ENCODE measurements at regions of chr5 and their contacts with region 1.

Region 1: GRCh38 chr5:133051580-133052332 is at the start of gene HSPA4:
- DNase-seq: peak; percentile 98
- H3K4me3 Mint-ChIP-seq: peak within 1 kb of the TSS; percentile 97
- H3K27ac Mint-ChIP-seq: peak within 1 kb of the TSS; percentile 100
- H3K4me1 Mint-ChIP-seq: peaks cover 50% of the 10 kb centered on the region
- H3K27me3 Mint-ChIP-seq: no peaks in the 10 kb centered on the region
- total RNA-seq, gene HSPA4: 88.2 to 94.6 TPM

Region 2: GRCh38 chr5:132963175-132964104 is 88.3 kb before region 1 on chr5 and contains the start of gene AFF4:
- CTCF ChIA-PET with region 1: interaction called, 9 read pairs
- POLR2A ChIA-PET with region 1: interaction called, 47 read pairs
- DNase-seq: peak; percentile 90
- H3K4me3 Mint-ChIP-seq: peak within 1 kb of the TSS; percentile 98
- H3K27ac Mint-ChIP-seq: peak within 1 kb of the TSS; percentile 94
- H3K4me1 Mint-ChIP-seq: peaks cover 27% of the 10 kb centered on the region
- H3K27me3 Mint-ChIP-seq: no peaks in the 10 kb centered on the region
- total RNA-seq, gene AFF4: 33.1 to 33.3 TPM

Region 3: DNA sequence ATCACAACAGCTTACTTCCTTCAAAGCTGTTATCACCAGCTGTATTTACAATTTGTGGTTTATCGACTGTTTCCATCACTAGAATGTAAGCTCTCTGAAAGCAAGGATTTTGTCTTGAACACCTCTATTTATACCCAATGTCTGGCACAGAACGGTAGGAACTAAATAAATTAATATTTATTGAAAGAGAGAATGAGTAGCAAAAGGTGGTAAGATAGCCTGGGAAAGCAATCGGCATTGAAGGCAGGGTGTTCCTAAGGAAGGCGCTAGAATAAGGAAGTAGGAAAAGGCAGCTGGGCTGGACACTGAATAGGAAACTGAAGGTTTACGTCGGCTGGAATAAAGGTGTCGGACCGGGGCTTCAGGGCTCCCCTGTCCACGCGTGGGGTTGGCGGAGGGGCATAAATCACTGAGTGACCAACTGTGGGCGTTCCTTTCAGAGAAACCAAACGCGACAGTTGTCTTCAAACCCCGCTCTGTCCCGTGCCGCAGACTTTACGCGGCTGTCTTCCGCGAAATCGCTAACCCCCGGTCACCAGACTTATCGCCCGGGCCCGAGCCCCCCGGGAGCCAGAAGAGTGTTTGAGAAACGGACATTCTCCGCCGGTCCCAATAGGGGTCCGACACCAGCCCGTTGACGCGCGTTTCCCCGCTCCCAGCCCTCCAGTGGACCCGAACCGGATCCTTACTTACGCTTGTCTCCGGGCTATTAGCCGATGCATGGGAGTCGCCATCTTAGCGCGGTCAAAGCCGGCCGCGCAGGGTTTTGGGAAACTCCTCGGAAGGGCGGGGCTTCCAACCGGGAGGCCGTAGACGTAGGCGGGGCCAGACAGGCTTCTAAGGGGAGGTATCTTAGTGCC is 25.7 kb before region 1 on chr5 and contains the start of gene ZCCHC10:
- CTCF ChIA-PET with region 1: interaction called, 7 read pairs
- POLR2A ChIA-PET with region 1: interaction called, 42 read pairs
- DNase-seq: peak; percentile 92
- H3K4me3 Mint-ChIP-seq: peak within 1 kb of the TSS; percentile 93
- H3K27ac Mint-ChIP-seq: peak within 1 kb of the TSS; percentile 83
- H3K4me1 Mint-ChIP-seq: peaks cover 22% of the 10 kb centered on the region
- H3K27me3 Mint-ChIP-seq: no peaks in the 10 kb centered on the region
- total RNA-seq, gene ZCCHC10: 27.9 to 28.0 TPM

Region 4: GRCh38 chr5:133032852-133033742 is 18.7 kb before region 1 on chr5:
- CTCF ChIA-PET with region 1: interaction called, 7 read pairs
- POLR2A ChIA-PET with region 1: interaction called, 42 read pairs
- DNase-seq: no peak
- H3K4me3 Mint-ChIP-seq: no peak overlapping the region
- H3K27ac Mint-ChIP-seq: no peak overlapping the region
- H3K4me1 Mint-ChIP-seq: peaks cover 9% of the 10 kb centered on the region
- H3K27me3 Mint-ChIP-seq: peaks cover 8% of the 10 kb centered on the region

Region 5: GRCh38 chr5:133063965-133064364 is 12.2 kb after region 1 on chr5:
- CTCF ChIA-PET with region 1: interaction called, 3 read pairs
- POLR2A ChIA-PET with region 1: interaction called, 12 read pairs
- DNase-seq: no peak
- H3K4me3 Mint-ChIP-seq: no peak overlapping the region
- H3K27ac Mint-ChIP-seq: no peak overlapping the region
- H3K4me1 Mint-ChIP-seq: peaks cover 19% of the 10 kb centered on the region
- H3K27me3 Mint-ChIP-seq: no peaks in the 10 kb centered on the region

Region 6: DNA sequence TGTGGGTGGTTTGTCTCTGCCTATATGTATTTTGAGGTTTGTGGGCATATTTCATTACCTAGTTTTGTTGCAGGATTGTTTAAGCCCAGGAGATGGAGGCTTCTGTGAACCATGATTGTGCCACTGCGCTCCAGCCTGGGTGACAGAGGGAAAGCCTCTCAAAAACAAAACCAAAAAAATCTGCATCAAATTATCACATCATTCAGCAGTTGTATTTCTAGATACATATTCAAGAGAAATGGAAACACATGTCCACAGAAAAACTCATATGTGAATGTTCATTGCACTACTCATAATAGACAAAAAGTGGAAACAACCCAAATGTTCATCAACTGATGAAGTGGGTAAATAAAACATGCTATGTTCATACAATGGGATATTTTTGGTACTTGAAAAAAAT is 29.9 kb after region 1 on chr5:
- CTCF ChIA-PET with region 1: no interaction called
- POLR2A ChIA-PET with region 1: no interaction called
- DNase-seq: no peak
- H3K4me3 Mint-ChIP-seq: no peak overlapping the region
- H3K27ac Mint-ChIP-seq: no peak overlapping the region
- H3K4me1 Mint-ChIP-seq: peaks cover 16% of the 10 kb centered on the region
- H3K27me3 Mint-ChIP-seq: no peaks in the 10 kb centered on the region

Measured in activated CD4-positive, alpha-beta memory T cell treated with anti-CD3 and anti-CD28 coated beads, Interleukin-2, amount 10 ng/mL, durations not matched to agents 7 days and 5 days (primary cell).